ENCODE measurements at regions of chr2 and their contacts with region 1.

Region 1: GRCh38 chr2:71510196-71510807 is 56.9 kb downstream of the DYSF start:
- DNase-seq: peak; percentile 87
- H3K4me3 ChIP-seq: no peak overlapping the region; a peak in 1 of 4 replicates
- H3K27ac ChIP-seq: no peak overlapping the region
- H3K4me1 ChIP-seq: peaks cover 0 to 6% of the 10 kb centered on the region in 2 experiments; a peak in 1 of 4 replicates
- H3K27me3 ChIP-seq: peaks cover 5% of the 10 kb centered on the region; the same call in 1 of the 2 replicates
- CTCF ChIP-seq: peak; percentile 87
- EP300 ChIP-seq: no peak
- RAD21 ChIP-seq: peak; percentile 85

Region 2: DNA sequence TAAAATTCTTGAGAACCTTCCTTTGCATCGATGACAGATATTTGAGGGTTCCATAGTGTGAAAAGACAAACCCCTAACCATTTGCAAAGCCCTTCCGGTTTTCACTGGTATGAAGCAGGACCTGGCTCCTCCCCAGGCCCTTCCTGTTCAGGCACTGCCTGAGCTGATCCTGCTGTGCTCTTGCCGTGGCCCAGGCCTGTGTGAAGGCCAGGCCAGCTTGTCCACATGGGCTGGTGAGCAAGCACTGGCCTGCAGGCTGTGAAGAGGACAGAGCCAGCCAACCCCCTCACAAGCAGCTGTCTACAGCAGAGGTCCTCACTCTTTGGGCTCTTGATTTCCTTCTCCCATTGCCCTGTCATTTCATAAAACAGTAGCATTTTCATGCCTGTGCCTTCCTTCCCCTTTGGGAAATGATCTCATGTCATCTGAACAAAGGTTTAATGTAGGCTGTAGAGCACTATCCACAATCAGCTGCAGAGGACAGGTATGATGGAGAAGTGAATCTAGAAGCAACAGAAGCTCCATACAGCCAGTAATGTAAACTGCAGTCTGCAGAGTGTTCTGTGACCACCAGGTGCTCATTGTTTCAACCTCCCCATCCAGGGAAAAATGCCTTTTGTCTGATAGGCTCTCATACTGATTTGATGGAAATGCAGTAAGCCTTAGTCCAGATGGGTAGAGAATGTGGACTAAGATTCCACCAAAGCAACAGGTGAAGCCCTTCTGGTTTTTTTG is 360.1 kb before region 1 on chr2:
- CTCF ChIA-PET with region 1: interaction called, 39 read pairs
- POLR2A ChIA-PET with region 1: no interaction called
- DNase-seq: no peak
- H3K4me3 ChIP-seq: no peak overlapping the region
- H3K27ac ChIP-seq: no peak overlapping the region
- H3K4me1 ChIP-seq: peaks cover 0 to 4% of the 10 kb centered on the region in 2 experiments; a peak in 1 of 4 replicates
- H3K27me3 ChIP-seq: peaks cover 5% of the 10 kb centered on the region; the same call in 1 of the 2 replicates
- CTCF ChIP-seq: no peak
- EP300 ChIP-seq: no peak
- RAD21 ChIP-seq: no peak

Region 3: GRCh38 chr2:71226965-71227560 is 283.2 kb before region 1 on chr2 and contains the start of gene PAIP2B:
- CTCF ChIA-PET with region 1: interaction called, 47 read pairs
- POLR2A ChIA-PET with region 1: no interaction called
- DNase-seq: peak; percentile 90
- H3K4me3 ChIP-seq: peak within 1 kb of the TSS; percentile 80 to 90
- H3K27ac ChIP-seq: peak within 1 kb of the TSS in 1 of 2 experiments; percentile 17; a peak in 1 of 4 replicates
- H3K4me1 ChIP-seq: peaks cover 0 to 4% of the 10 kb centered on the region in 2 experiments; a peak in 1 of 4 replicates
- H3K27me3 ChIP-seq: no peaks in the 10 kb centered on the region
- CTCF ChIP-seq: no peak
- EP300 ChIP-seq: no peak
- RAD21 ChIP-seq: no peak; the same call in 1 of the 2 replicates
- polyA plus RNA-seq, gene PAIP2B: 0.20 and 0.23 TPM in 2 replicates

Region 4: DNA sequence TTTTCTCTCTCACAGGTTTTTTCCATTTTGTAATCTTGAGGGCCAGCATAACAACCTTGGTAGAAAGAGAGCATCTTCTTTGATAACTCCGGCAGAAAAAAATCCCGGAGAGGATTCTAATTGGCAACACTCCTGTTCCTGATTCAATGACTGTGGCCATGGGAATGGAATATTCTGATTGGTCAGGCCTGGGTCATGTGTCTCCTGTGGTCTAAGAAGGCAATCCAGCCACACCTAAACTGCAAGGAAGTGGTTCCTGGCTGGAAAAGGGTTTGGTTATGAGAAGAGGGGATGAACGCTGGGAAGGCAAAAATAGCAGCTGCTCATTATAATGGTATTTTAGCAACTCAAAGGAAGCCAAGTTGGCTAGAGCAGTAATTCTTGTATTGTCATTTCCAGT is 203.5 kb before region 1 on chr2:
- CTCF ChIA-PET with region 1: interaction called, 221 read pairs
- POLR2A ChIA-PET with region 1: no interaction called
- DNase-seq: no peak
- H3K4me3 ChIP-seq: no peak overlapping the region
- H3K27ac ChIP-seq: no peak overlapping the region
- H3K4me1 ChIP-seq: no peaks in the 10 kb centered on the region
- H3K27me3 ChIP-seq: no peaks in the 10 kb centered on the region
- CTCF ChIP-seq: no peak
- EP300 ChIP-seq: no peak
- RAD21 ChIP-seq: no peak

Region 5: DNA sequence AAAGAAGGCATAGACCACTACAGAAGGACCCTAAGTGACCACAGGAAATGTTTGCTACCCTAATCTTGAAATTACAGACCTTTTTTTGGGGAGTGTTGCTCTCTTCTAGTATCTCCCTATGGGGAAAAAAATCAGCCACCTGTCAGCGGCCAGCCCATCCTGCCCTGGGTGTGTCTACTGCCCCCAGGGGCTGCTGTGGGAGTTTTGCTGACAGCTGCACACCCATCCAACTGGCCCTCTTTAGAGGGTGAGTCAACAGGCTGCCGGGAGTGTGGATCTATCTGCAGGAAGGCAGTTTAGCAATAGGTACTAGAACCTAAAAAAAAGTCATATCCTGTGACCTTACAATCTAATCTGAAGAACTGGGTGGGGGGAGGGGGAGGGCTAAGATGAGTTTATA is 57.7 kb before region 1 on chr2:
- CTCF ChIA-PET with region 1: interaction called, 11 read pairs
- POLR2A ChIA-PET with region 1: no interaction called
- DNase-seq: no peak
- H3K4me3 ChIP-seq: no peak overlapping the region
- H3K27ac ChIP-seq: no peak overlapping the region
- H3K4me1 ChIP-seq: peaks cover 0 to 21% of the 10 kb centered on the region in 2 experiments; a peak in 1 of 4 replicates
- H3K27me3 ChIP-seq: 0 out of 2 replicates have a peak, but pooled peaks cover 5% of the 10 kb centered on the region
- CTCF ChIP-seq: no peak; the same call in 1 of the 2 replicates
- EP300 ChIP-seq: no peak
- RAD21 ChIP-seq: no peak

Region 6: DNA sequence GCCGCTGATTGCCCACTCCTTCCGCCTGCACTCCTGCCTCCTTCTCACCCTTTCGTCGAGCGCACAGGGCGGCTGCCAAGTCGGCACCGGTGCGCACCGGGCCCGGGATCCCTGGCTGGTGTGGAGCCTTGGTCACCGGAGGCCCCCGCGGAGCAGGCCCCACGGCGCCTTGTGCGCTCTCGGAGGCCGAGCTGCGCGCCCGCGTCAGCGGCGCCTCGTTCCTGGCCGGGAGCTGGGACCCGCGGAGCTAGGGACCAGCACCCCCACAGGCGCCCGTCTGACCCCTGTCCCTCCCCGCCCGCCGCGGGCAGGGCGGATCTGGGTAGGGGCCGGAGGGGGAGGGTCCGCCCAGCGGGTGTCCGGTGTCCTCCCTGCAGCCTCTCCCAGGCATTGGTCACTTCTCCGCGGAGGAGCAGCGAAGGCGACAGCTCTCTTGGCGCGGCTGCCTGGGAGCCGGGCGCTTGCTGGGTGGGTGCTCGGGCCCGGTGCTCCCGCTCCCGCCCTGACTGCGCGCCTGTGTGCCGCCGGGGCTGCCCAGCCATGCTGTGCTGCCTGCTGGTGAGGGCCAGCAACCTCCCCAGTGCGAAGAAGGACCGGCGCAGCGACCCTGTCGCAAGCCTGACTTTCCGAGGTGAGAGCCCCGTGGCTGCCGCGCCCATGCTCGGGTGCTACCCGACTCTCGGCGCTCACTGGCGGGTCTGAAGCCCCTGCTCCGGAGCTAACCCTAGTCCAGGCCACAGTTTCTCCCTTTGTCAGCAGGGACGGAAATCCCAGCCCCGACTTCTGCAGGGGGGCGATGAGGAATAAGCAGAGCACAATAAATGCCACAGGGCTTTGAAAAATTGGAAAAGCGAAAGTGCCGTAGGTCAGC is 43.8 kb before region 1 on chr2:
- CTCF ChIA-PET with region 1: interaction called, 108 read pairs
- POLR2A ChIA-PET with region 1: no interaction called
- DNase-seq: peak; percentile 85
- H3K4me3 ChIP-seq: peak overlapping the region; percentile 57 to 73
- H3K27ac ChIP-seq: no peak overlapping the region
- H3K4me1 ChIP-seq: peaks cover 3 to 4% of the 10 kb centered on the region in 2 experiments; a peak in 2 of 4 replicates
- H3K27me3 ChIP-seq: peaks cover 48% of the 10 kb centered on the region
- CTCF ChIP-seq: no peak
- EP300 ChIP-seq: no peak
- RAD21 ChIP-seq: no peak

Region 7: GRCh38 chr2:71524476-71524875 is 14.2 kb after region 1 on chr2:
- CTCF ChIA-PET with region 1: interaction called, 26 read pairs
- POLR2A ChIA-PET with region 1: no interaction called
- DNase-seq: no peak
- H3K4me3 ChIP-seq: no peak overlapping the region
- H3K27ac ChIP-seq: no peak overlapping the region
- H3K4me1 ChIP-seq: no peaks in the 10 kb centered on the region
- H3K27me3 ChIP-seq: peaks cover 19% of the 10 kb centered on the region; the same call in 1 of the 2 replicates
- CTCF ChIP-seq: no peak
- EP300 ChIP-seq: no peak
- RAD21 ChIP-seq: no peak